A673 (cell line): ENCODE measurements at regions of chr11 and their contacts with region 1.

Region 1: GRCh38 chr11:93756748-93757147 is 15.3 kb downstream of the C11orf54 start:
- DNase-seq: no peak
- H3K4me3 ChIP-seq: no peak overlapping the region
- H3K27ac ChIP-seq: no peak overlapping the region
- H3K4me1 ChIP-seq: no peaks in the 10 kb centered on the region
- H3K27me3 ChIP-seq: no peaks in the 10 kb centered on the region
- CTCF ChIP-seq: no peak

Region 2: GRCh38 chr11:93784152-93784934 is 27.6 kb after region 1 on chr11 and contains the start of gene MED17:
- CTCF ChIA-PET with region 1: no interaction called
- POLR2A ChIA-PET with region 1: interaction called, 10 read pairs
- intact Hi-C with region 1: no loop called
- DNase-seq: peak; percentile 99
- H3K4me3 ChIP-seq: peak within 1 kb of the TSS; percentile 83
- H3K27ac ChIP-seq: peak within 1 kb of the TSS; percentile 94
- H3K4me1 ChIP-seq: peaks cover 20% of the 10 kb centered on the region
- H3K27me3 ChIP-seq: no peaks in the 10 kb centered on the region
- CTCF ChIP-seq: peak; percentile 53
- total RNA-seq, gene MED17: 63.4 and 67.9 TPM in 2 replicates